ENCODE measurements at regions of chr4 and their contacts with region 1.

Region 1: GRCh38 chr4:47933840-47934239 is 19.5 kb upstream of the NFXL1 start:
- DNase-seq: peak; percentile 51
- H3K4me3 Mint-ChIP-seq: no peak overlapping the region
- H3K27ac Mint-ChIP-seq: no peak overlapping the region
- H3K4me1 Mint-ChIP-seq: peaks cover 20% of the 10 kb centered on the region
- H3K27me3 Mint-ChIP-seq: no peaks in the 10 kb centered on the region
- CTCF ChIP-seq: peak; percentile 44

Region 2: DNA sequence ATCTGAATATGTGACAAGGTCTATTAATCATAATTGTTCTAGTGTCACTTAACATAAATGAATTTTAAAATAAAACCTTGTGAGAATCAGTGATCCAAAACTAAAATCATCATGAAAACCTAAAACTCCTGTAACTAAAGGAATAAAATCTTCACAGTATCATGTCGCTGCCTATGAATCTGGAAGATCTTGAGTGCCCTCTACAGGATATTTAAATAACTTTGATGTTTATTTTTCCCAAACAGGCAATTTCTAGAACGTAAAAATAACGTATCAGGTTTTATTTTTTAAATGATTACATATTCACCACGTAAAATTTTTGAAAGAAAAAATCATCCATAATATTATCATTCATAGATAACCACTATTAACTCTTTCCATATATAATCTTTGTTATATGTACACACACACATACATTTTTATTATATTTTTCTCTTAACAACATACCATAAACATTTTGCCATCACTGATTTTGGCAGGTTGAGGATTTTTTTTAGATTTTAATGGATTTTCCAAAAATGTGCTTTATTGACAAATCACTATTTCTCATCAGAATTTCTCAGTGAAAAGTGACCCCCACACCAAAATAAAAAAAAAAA is 549.9 kb before region 1 on chr4:
- CTCF ChIA-PET with region 1: no interaction called
- POLR2A ChIA-PET with region 1: no interaction called
- intact Hi-C with region 1: loop called (anchors 10 kb)
- DNase-seq: peak; percentile 45
- H3K4me3 Mint-ChIP-seq: no peak overlapping the region
- H3K27ac Mint-ChIP-seq: no peak overlapping the region
- H3K4me1 Mint-ChIP-seq: no peaks in the 10 kb centered on the region
- H3K27me3 Mint-ChIP-seq: peaks cover 39% of the 10 kb centered on the region
- CTCF ChIP-seq: peak; percentile 48

Region 3: DNA sequence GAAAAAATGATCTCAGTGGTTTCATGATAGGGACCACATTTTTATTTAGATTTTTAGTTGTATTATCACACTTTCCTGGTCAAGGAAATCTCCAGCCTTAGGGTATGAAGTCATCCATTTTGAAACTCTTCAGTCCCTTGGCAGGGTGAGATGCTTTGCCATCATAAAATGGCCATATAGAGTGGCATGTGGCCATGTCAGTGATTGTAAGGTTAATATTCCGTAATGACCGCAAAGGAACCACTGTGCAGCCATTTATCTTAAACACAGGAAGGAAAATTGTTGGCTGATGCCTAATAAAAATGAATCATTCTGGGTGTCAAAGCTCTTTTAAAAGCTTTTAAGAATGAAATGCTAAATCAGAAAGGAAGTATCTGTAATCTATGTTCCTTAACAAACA is 505.9 kb before region 1 on chr4:
- CTCF ChIA-PET with region 1: no interaction called
- POLR2A ChIA-PET with region 1: no interaction called
- intact Hi-C with region 1: no loop called
- DNase-seq: no peak
- H3K4me3 Mint-ChIP-seq: no peak overlapping the region
- H3K27ac Mint-ChIP-seq: no peak overlapping the region
- H3K4me1 Mint-ChIP-seq: no peaks in the 10 kb centered on the region
- H3K27me3 Mint-ChIP-seq: no peaks in the 10 kb centered on the region
- CTCF ChIP-seq: no peak

Region 4: GRCh38 chr4:47668810-47669408 is 264.9 kb before region 1 on chr4:
- CTCF ChIA-PET with region 1: interaction called, 44 read pairs
- POLR2A ChIA-PET with region 1: no interaction called
- intact Hi-C with region 1: loop called (anchors 2 kb)
- DNase-seq: peak; percentile 64
- H3K4me3 Mint-ChIP-seq: no peak overlapping the region
- H3K27ac Mint-ChIP-seq: no peak overlapping the region
- H3K4me1 Mint-ChIP-seq: peaks cover 5% of the 10 kb centered on the region
- H3K27me3 Mint-ChIP-seq: no peaks in the 10 kb centered on the region
- CTCF ChIP-seq: peak; percentile 72

Region 5: DNA sequence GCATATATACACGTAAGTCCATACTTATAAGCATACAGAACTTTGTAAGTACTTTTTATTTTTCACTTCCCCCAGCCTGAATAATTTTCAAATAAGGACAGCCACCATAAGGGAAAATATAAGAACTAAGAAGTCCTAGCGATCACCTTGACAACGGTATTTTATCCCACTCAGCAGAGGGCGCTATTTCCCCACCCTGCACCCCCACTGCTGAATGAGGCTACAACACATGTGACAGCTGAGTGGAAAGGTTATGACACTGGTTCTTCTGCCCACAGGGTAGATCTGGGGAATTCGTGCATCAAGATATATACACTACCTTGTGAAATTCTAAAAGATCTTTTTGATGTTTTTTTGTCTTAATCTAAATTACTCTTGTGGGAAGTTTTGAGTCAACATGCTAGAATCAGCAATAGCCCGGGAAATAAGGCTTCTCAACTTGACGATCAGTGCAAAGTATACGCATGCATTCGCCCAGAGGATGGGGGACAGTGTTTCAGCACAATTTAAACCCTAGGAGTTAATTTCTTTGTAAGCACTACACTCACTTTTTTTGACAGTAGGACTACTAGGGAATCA is 247.5 kb before region 1 on chr4:
- CTCF ChIA-PET with region 1: interaction called, 8 read pairs
- POLR2A ChIA-PET with region 1: no interaction called
- intact Hi-C with region 1: loop called (anchors 1 kb)
- DNase-seq: peak; percentile 62
- H3K4me3 Mint-ChIP-seq: no peak overlapping the region
- H3K27ac Mint-ChIP-seq: no peak overlapping the region
- H3K4me1 Mint-ChIP-seq: no peaks in the 10 kb centered on the region
- H3K27me3 Mint-ChIP-seq: no peaks in the 10 kb centered on the region
- CTCF ChIP-seq: peak; percentile 61

Region 6: DNA sequence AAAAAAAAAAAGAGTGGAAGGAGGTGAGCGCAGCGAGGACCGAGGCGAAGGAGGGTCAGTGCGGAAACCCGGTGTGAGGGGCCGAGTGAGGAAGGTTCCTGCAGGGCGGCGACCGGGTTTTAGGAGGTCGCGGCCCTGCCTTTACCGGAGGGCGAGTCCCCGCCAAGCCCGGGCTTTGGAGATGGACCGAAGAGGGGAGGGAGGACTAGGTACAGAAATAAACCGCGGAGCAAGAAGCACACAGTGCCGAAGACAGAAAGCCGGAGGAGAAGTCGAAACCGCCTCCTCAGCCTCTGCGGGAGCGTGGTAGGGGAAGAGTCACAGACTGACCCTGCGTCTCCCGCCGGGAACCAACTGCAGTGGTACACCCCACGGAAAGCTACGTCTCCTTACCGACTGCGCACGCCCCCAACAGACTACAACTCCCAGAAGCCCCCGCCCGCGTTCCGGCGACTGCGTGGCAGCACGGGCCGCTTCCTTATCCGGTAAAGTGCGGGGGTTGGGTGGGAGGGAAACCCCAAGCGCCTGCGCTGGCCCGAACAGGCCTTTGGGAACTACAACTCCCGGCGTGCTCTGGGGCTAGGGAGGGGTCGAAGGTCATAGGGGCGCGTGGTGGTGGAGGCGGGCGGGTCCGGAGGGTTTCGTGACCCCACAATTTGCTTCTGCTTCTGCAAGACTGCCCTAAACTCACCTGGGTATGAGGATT is 19.5 kb before region 1 on chr4 and contains the start of gene NFXL1:
- CTCF ChIA-PET with region 1: interaction called, 14 read pairs
- POLR2A ChIA-PET with region 1: interaction called, 9 read pairs
- intact Hi-C with region 1: no loop called
- DNase-seq: peak; percentile 98
- H3K4me3 Mint-ChIP-seq: peak within 1 kb of the TSS; percentile 88
- H3K27ac Mint-ChIP-seq: peak within 1 kb of the TSS; percentile 83
- H3K4me1 Mint-ChIP-seq: peaks cover 20% of the 10 kb centered on the region
- H3K27me3 Mint-ChIP-seq: no peaks in the 10 kb centered on the region
- CTCF ChIP-seq: no peak
- total RNA-seq, gene NFXL1: 52.4 and 53.0 TPM in 2 replicates

Region 7: DNA sequence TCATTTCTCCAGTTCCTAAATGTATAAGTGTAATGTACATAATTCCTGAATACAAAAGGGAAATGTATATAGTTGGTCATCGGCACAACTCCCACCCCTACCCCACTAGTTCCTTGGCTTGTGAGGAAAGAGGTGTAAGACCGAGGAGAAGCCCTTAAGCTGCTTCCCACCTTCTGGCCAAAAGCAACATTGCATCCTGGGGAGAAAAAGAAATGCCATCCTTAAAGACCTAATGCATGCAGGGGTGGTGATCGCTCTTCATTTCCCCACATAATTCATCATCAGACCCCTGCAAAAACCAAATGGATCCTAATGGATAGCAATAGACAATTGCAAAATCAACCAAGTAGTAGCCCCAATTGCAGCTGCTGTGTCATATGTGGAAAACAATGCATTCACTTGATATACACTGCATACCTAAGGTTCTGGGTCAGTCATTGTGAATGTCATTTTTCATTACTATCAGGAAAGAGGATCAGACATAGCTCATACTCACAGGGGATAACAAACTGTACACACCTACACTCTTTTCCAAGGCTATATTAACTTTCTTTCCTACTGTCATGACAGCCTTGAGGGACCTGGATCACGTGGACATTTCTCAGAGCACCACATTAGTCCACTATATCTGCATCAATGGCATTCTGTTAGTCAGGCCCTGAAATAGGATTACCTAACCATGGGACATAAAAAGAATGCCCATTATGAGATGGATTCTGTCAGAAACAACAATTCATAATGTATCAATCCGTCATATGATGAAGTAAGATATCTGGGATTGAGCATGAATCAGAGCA is 12.3 kb after region 1 on chr4:
- CTCF ChIA-PET with region 1: interaction called, 13 read pairs
- POLR2A ChIA-PET with region 1: no interaction called
- intact Hi-C with region 1: no loop called
- DNase-seq: no peak
- H3K4me3 Mint-ChIP-seq: no peak overlapping the region
- H3K27ac Mint-ChIP-seq: no peak overlapping the region
- H3K4me1 Mint-ChIP-seq: no peaks in the 10 kb centered on the region
- H3K27me3 Mint-ChIP-seq: no peaks in the 10 kb centered on the region
- CTCF ChIP-seq: no peak

Region 8: DNA sequence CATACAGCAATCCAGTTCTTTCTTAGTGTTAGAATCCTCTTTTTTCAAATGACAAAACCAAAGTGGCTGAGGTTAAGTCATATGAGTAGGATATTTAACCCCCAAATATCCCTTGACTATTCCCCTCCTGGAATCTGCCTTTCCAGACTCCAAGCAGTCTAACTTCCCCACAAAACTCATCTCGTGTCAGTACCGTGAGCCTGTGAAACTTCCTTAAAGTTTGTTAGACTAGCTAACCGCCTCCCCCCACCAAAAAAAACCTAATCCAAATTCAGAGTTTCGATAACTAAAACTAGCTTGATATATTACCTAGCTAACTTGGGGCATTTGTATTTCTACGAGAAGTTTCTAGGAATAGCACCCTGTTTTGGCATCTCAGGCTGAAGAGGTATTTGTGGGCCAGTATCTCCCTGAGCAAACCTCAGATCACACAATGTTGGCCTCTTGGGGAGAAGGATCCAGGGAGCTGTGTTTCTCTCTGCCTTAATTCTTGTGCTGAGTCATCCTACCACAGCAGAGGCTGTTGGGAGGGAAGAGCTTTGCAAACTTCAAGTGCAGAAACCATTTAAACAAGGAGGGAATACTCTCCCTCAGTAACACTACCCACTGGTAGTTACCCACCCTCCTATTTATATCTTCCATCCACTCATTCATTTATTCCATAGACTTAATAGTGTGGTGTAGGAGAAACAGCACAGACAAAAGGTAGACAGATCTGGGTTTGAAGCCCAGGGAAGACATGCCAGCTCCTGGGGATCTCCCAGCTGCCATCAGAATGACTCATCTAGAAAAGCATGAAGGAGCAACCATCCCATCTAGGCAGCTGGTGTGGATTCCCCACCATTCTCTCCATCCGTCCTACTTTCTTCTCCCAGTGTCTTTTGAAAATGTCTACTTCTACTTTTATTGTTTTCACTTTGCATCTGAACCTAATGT is 239.5 kb after region 1 on chr4:
- CTCF ChIA-PET with region 1: no interaction called
- POLR2A ChIA-PET with region 1: no interaction called
- intact Hi-C with region 1: no loop called
- DNase-seq: peak; percentile 79
- H3K4me3 Mint-ChIP-seq: no peak overlapping the region
- H3K27ac Mint-ChIP-seq: peak overlapping the region; percentile 87
- H3K4me1 Mint-ChIP-seq: peaks cover 10% of the 10 kb centered on the region
- H3K27me3 Mint-ChIP-seq: no peaks in the 10 kb centered on the region
- CTCF ChIP-seq: no peak